ENCODE measurements at regions of chr4 and their contacts with region 1.

Region 1: GRCh38 chr4:79357365-79357764 is 31.5 kb upstream of the NAA11 start:
- DNase-seq: no peak
- H3K4me3 ChIP-seq: no peak overlapping the region
- H3K27ac ChIP-seq: no peak overlapping the region
- H3K4me1 ChIP-seq: no peaks in the 10 kb centered on the region
- H3K27me3 ChIP-seq: no peaks in the 10 kb centered on the region
- CTCF ChIP-seq: no peak
- EP300 ChIP-seq: no peak
- POLR2A ChIP-seq: no peak

Region 2: DNA sequence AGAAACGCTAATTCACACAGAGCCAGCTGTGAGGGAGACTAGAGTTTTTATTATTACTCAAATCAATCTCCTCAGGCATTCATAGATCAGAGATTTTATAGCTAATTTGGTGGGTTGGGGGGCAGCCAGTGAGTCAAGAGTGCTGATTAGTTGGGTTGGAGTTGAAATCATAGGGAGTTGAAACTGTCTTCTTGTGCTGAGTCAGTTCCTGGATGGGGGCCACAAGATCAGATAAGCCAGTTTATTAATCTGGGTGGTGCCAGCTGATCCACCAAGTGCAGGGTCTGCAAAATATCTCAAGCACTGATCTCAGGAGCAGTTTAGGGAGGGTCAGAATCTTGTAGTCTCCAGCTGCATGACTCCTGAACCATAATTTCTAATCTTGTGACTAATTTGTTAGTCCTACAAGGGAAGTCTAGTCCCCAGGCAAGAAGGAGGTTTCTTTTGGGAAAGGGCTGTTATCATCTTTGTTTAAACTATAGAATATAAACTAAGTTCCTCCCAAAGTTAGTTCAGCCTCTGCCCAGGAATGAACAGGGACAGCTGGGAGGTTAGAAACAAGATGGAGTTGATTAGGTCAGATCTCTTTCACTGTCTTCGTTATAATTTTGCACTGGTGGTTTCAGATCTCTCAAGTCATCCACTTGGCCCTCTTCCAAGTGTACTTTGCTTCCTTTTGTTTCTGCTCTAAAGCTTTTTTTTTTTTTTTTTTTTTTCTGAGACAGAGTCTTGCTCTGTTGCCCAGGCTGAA is 26.1 kb before region 1 on chr4:
- in situ Hi-C with region 1: no loop called
- intact Hi-C with region 1: no loop called
- DNase-seq: no peak
- H3K4me3 ChIP-seq: no peak overlapping the region
- H3K27ac ChIP-seq: no peak overlapping the region
- H3K4me1 ChIP-seq: no peaks in the 10 kb centered on the region
- H3K27me3 ChIP-seq: no peaks in the 10 kb centered on the region
- CTCF ChIP-seq: no peak
- EP300 ChIP-seq: no peak
- POLR2A ChIP-seq: no peak

Region 3: DNA sequence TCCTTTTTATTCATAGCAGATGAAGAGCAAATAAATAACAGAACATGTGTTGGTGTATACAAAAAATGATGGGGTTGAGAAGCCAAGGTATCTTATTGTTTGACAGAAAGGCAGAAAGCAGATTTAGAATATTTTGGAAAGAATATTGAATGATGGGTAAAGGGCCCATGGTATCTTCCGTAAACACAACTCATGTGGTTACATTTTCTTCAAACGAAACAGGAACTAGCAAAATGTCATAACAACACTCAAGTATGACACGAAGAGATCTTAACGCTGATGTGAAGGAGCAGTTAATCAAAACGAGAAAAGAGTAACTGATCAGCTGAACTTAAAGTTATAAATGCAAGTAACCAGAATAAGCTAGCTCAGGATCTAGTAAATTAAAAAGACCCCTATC is 246.3 kb after region 1 on chr4:
- in situ Hi-C with region 1: no loop called
- intact Hi-C with region 1: no loop called
- DNase-seq: no peak
- H3K4me3 ChIP-seq: no peak overlapping the region
- H3K27ac ChIP-seq: no peak overlapping the region
- H3K4me1 ChIP-seq: no peaks in the 10 kb centered on the region
- H3K27me3 ChIP-seq: no peaks in the 10 kb centered on the region
- CTCF ChIP-seq: no peak
- EP300 ChIP-seq: no peak
- POLR2A ChIP-seq: no peak

Region 4: GRCh38 chr4:80831383-80832361 is 1474.3 kb after region 1 on chr4:
- in situ Hi-C with region 1: no loop called
- intact Hi-C with region 1: loop called (anchors 10 kb)
- DNase-seq: no peak
- H3K4me3 ChIP-seq: no peak overlapping the region
- H3K27ac ChIP-seq: no peak overlapping the region
- H3K4me1 ChIP-seq: no peaks in the 10 kb centered on the region
- H3K27me3 ChIP-seq: no peaks in the 10 kb centered on the region
- CTCF ChIP-seq: no peak
- EP300 ChIP-seq: no peak
- POLR2A ChIP-seq: no peak